Dorsolateral prefrontal cortex (tissue), 120 donors: ENCODE measurements at regions of chr1 and their contacts with region 1.

Region 1: GRCh38 chr1:33466159-33466558 is 6.3 kb upstream of the ZSCAN20 start:
- DNase-seq: no peak
- H3K4me3 ChIP-seq: no peak overlapping the region
- H3K27ac ChIP-seq: no peak overlapping the region
- H3K27me3 ChIP-seq: no peaks in the 10 kb centered on the region
- CTCF ChIP-seq: no peak

Region 2: DNA sequence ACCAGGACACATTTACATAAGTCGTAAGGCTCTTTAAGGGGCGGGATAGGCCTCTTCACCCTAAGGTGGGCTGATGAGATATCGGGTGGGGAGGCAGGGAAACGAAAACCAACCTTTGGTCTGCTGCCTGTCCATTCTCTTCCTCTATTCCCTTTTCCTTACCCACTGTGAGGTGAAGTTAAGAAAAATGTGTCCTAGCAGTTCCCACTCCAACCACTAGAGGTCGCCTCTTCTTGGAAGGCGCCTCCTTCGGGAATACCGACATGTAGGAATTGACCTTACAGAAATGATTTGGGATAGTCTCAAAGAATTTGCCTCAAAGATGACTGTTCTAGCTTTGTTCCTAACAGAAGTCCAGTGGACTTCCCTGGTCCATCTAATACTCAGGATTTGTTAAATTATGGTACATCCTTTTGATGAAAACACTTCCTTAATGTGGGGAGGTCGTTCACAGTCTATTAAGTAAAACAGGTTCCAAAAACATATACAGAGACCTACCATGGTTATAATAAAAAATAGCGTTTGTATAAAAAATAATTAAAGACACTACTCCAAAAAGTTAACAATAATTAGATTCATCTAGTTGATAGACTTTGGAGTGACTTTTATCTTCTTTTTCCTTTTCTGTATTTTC is 371.1 kb before region 1 on chr1:
- intact Hi-C with region 1: loop called in 1 of 2 experiments (anchors 5 kb)
- DNase-seq: peak in 2 of 10 donors; percentile 50 to 68
- H3K4me3 ChIP-seq: no peak overlapping the region
- H3K27ac ChIP-seq: peak overlapping the region in 1 of 59 donors; percentile 39
- H3K27me3 ChIP-seq: no peaks in the 10 kb centered on the region
- CTCF ChIP-seq: peak; percentile 89 to 100 (median 96)

Region 3: DNA sequence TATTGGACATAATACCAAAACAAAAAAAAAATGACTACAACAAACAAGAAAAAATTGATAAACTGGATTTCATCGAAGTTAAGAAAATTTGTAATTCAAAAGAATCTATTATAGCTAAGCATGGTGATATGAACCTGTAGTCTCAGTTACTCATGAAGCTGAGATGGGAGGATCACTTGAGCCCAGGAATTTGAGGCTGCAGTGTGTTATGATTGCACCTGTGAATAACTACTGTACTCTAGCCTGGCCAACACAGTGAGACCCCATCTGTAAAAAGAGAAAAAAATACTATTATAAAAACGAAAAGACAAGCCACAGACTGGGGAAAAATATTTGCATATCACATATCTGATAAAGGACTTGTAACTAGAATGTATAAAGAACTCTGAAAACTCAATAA is 259.8 kb before region 1 on chr1:
- intact Hi-C with region 1: no loop called
- DNase-seq: no peak
- H3K4me3 ChIP-seq: no peak overlapping the region
- H3K27ac ChIP-seq: no peak overlapping the region
- H3K27me3 ChIP-seq: no peaks in the 10 kb centered on the region
- CTCF ChIP-seq: no peak

Region 4: GRCh38 chr1:33378976-33379375 is 87.2 kb before region 1 on chr1:
- intact Hi-C with region 1: loop called in 1 of 2 experiments (anchors 5 kb)
- DNase-seq: peak in 1 of 10 donors; percentile 57
- H3K4me3 ChIP-seq: no peak overlapping the region
- H3K27ac ChIP-seq: peak overlapping the region in 31 of 59 donors; percentile 0 to 78 (median 42)
- H3K27me3 ChIP-seq: no peaks in the 10 kb centered on the region
- CTCF ChIP-seq: peak in 1 of 56 donors; percentile 18

Region 5: DNA sequence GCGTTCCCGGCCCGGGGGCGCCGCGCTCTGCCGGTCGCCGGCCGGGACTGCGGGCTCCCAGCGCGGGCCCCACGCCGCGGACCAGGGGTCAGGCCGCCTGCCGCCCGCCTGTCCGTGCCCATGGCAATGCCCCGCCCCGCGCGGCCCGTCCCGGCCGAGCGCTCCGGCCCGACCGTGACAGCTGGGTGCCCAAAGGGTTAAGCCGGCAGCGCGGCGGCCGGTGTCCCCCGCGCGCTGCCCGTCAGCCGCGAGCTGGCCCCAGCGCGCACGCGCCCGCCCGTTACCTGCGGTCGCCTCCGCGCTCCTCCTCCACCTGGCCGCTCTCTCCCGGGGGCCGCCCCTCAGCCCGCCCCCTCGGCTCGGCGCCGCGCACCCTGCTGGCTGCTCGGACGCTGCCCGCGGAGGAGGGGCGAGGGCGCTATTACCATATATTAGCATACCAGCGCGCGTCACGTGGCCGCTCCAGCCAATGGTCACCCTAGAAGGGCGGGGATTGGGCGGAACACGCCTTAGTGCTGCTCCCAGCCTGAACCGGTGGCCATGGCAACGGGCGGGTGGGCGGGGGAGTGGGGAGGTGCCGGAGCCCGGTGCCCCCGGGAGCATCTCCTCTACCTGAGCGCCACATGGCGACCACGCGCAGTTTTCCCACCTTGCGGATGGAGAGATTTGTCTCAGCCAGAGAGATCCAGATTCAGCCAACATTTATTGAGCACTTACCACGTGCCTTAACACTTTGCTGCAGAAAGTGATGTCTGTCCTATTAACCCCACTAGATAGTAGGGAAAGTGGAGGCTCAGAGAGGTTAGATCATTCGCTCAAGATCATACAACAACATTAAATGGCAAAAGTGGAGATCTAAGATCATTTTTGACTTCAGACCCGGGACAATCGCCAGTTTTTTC is 35.2 kb before region 1 on chr1 and contains the start of gene PHC2:
- intact Hi-C with region 1: loop called (anchors 5 kb)
- DNase-seq: peak; percentile 99 to 100 (median 100)
- H3K4me3 ChIP-seq: peak within 1 kb of the TSS; percentile 36 to 92 (median 81)
- H3K27ac ChIP-seq: peak within 1 kb of the TSS in 55 of 59 donors; percentile 7 to 91 (median 74)
- H3K27me3 ChIP-seq: no peaks in the 10 kb centered on the region
- CTCF ChIP-seq: peak in 53 of 56 donors; percentile 14 to 72 (median 47)
- total RNA-seq, gene PHC2: 68.2 to 158 (median 93.1) TPM